ENCODE measurements at regions of chr3 and their contacts with region 1.

Region 1: DNA sequence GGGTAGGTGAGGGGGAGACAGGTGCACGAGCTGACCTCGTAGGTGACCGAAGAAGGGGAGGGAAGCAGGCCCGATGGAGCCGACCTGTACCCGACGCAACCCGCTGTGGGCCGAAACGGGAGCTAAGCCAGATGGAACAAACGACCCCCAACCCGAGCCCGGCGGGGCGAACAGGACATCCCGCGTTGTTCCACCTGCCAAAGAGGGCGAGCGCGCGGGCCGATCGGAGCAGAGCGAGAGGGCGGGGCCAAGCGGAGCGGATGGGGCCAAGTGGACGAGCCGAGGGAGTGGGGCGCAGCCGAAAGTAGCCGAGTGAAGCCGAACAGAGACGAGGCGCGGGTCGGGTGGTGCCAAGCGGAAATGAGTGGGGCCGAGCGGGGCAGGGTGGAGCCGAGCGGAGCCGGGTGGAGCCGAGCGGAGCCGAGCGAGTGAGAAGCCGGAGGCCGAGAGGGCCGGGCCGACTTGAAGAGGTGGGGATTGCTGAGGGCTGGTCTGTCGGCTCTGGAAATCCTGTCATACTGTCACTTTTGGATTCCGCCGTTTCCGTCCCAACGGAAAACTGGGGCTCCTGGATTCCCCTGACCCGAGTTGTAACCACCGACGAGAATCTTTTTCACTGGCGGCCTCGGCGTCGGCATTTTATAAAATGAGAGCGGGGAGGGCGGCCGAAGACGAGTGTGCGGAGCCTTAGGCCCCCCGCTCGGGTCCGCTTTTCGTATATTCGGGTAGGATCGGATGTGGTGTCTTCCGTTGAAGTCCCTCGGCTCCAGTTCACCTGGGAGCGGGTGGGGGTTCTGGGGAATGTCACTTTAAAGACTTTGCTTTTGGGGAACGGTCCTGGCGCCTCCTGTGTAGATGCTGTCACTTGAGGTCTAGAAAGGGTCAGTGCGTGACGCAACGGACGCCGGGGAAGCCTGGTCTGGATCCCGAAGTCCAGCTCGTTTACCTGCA is 15.6 kb upstream of the WNT7A start:
- DNase-seq: peak; percentile 93 to 95 (median 93)
- H3K4me3 ChIP-seq: peak overlapping the region; percentile 58 to 72
- H3K4me3 Mint-ChIP-seq: peak overlapping the region; percentile 78 to 94 (median 90)
- H3K27ac ChIP-seq: peak overlapping the region; percentile 73
- H3K27ac Mint-ChIP-seq: peak overlapping the region; percentile 64 to 96 (median 93)
- H3K4me1 ChIP-seq: peaks cover 40% of the 10 kb centered on the region
- H3K4me1 Mint-ChIP-seq: peaks cover 14 to 47% (median 28%) of the 10 kb centered on the region in 4 donors
- H3K27me3 ChIP-seq: no peaks in the 10 kb centered on the region
- H3K27me3 Mint-ChIP-seq: no peaks in the 10 kb centered on the region

Region 2: GRCh38 chr3:13057282-13058040 is 838.0 kb before region 1 on chr3:
- CTCF ChIA-PET with region 1: no interaction called
- POLR2A ChIA-PET with region 1: no interaction called
- intact Hi-C with region 1: no loop called
- DNase-seq: no peak
- H3K4me3 ChIP-seq: no peak overlapping the region
- H3K4me3 Mint-ChIP-seq: peak overlapping the region in 1 of 8 donors; percentile 4
- H3K27ac ChIP-seq: no peak overlapping the region
- H3K27ac Mint-ChIP-seq: peak overlapping the region in 1 of 7 donors; percentile 69
- H3K4me1 ChIP-seq: no peaks in the 10 kb centered on the region
- H3K4me1 Mint-ChIP-seq: no peaks in the 10 kb centered on the region
- H3K27me3 ChIP-seq: no peaks in the 10 kb centered on the region
- H3K27me3 Mint-ChIP-seq: peaks cover 1 to 2% of the 10 kb centered on the region in 2 donors

Region 3: DNA sequence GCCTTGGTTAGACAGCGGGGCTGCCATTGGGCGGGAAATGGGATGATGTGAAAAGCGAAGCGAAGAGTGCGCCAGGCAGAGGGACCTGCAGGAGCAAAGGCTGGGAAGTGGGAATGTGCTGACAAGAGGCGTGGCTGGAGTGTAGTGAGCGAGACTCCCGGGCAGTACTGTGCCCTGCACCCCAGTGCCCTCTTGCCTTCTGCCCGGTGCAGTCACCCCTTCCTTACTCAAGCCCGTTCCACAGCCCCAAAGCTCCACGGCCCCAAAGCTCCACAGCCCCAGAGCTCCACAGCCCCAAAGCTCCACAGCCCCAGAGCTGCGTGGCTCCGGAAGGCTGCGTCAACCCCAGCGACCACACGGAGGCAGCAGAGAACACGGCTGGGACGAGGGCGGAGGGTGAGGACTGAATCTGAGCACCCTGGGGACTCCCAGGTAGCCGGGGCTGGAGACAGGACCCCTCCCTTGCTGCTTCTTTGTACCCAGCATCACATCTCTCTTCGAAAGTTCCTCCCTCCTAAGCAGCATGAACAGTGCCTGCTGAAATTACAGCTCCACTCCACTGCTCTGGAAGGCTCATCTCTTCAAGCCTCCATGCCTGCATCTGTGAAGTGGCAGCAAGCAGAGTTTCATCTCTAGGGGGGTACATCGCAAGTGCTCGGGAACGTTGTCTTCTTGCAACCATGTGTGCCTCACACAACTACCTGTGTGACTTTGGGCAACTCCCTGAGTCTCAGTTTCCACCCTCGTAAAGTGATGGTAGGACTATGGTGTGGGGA is 237.6 kb before region 1 on chr3:
- CTCF ChIA-PET with region 1: interaction called, 996 read pairs
- POLR2A ChIA-PET with region 1: interaction called, 55 read pairs
- intact Hi-C with region 1: no loop called
- DNase-seq: peak; percentile 62 to 73 (median 69)
- H3K4me3 ChIP-seq: no peak overlapping the region
- H3K4me3 Mint-ChIP-seq: peak overlapping the region in 2 of 8 donors; percentile 55 to 57
- H3K27ac ChIP-seq: no peak overlapping the region
- H3K27ac Mint-ChIP-seq: peak overlapping the region in 2 of 7 donors; percentile 42 to 51
- H3K4me1 ChIP-seq: peaks cover 31% of the 10 kb centered on the region
- H3K4me1 Mint-ChIP-seq: peaks cover 15 to 46% (median 28%) of the 10 kb centered on the region in 4 donors
- H3K27me3 ChIP-seq: peaks cover 6% of the 10 kb centered on the region
- H3K27me3 Mint-ChIP-seq: peaks cover 3 to 5% of the 10 kb centered on the region in 2 donors

Region 4: DNA sequence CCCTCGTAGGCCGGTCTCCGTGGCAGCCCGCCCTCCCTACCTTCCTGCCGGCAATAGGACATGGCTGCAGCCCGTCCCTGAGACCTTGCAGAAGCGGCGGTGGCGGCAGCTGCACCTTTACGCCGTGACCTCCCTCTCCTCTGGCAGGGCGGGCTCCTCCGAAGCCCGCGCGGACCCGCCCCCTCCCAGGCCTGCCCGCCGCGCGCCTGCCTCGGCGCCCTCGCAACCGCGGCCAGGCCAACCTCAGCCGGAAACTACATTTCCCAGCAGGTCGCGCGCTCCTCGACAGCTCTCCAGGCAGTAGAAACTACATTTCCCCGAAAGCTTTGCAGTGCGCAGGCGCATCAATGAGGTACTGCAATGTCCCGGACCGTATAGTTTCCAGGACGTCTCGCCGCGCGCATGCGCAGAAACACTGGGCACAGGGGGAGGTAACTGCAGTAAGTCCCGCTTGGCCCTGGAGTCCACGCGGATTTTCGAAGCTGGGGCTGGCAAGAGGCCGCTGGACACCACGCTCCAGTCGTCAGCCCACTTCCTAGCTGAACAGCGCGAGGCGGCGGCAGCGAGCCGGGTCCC is 229.3 kb after region 1 on chr3 and contains the starts of genes CHCHD4 and TMEM43:
- CTCF ChIA-PET with region 1: interaction called, 13 read pairs
- POLR2A ChIA-PET with region 1: interaction called, 18 read pairs
- intact Hi-C with region 1: loop called (anchors 1 kb)
- DNase-seq: peak; percentile 97 to 99 (median 99)
- H3K4me3 ChIP-seq: peak within 1 kb of the TSS; percentile 53 to 78
- H3K4me3 Mint-ChIP-seq: peak within 1 kb of the TSS; percentile 95 to 98 (median 96)
- H3K27ac ChIP-seq: peak within 1 kb of the TSS; percentile 89
- H3K27ac Mint-ChIP-seq: peak within 1 kb of the TSS; percentile 96 to 97 (median 97)
- H3K4me1 ChIP-seq: peaks cover 38% of the 10 kb centered on the region
- H3K4me1 Mint-ChIP-seq: peaks cover 38 to 64% (median 54%) of the 10 kb centered on the region in 4 donors
- H3K27me3 ChIP-seq: no peaks in the 10 kb centered on the region
- H3K27me3 Mint-ChIP-seq: no peaks in the 10 kb centered on the region
- total RNA-seq, gene CHCHD4: 7.5 to 9.3 TPM
- total RNA-seq, gene TMEM43: 69.3 to 69.7 TPM

Region 5: DNA sequence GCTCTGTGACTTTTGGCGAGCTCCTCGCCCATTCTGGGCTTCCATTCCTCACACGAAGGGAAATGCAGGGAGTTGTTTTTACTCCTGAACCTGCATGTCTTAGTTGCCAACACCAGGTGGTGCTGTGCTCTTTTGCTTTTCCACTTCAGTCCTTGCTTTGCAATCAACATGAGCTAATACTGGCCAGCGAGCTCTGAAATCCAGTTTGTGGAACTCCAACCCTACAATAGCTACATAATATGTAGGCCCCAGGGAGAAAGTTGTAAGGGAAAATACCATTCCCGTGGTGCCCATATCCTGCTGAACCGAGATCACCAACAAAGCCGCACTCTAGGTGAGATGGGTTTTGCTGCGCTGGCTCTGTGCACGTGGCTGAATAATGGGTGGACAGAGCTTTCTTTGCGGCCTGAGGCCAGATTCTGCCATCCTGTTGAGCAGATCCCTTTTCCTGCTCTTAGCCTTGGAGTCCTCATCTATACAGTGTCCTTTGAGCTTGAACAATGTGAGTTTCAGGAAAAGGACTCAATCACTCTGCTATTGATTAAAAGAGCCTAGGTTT is 308.2 kb after region 1 on chr3:
- CTCF ChIA-PET with region 1: interaction called, 41 read pairs
- POLR2A ChIA-PET with region 1: interaction called, 3 read pairs
- intact Hi-C with region 1: loop called (anchors 1 kb)
- DNase-seq: peak in 4 of 5 donors; percentile 31 to 43 (median 35)
- H3K4me3 ChIP-seq: no peak overlapping the region
- H3K4me3 Mint-ChIP-seq: no peak overlapping the region
- H3K27ac ChIP-seq: no peak overlapping the region
- H3K27ac Mint-ChIP-seq: peak overlapping the region in 1 of 7 donors; percentile 56
- H3K4me1 ChIP-seq: no peaks in the 10 kb centered on the region
- H3K4me1 Mint-ChIP-seq: peaks cover 3 to 6% (median 5%) of the 10 kb centered on the region in 4 donors
- H3K27me3 ChIP-seq: no peaks in the 10 kb centered on the region
- H3K27me3 Mint-ChIP-seq: no peaks in the 10 kb centered on the region

Region 6: GRCh38 chr3:14431892-14432834 is 536.7 kb after region 1 on chr3:
- CTCF ChIA-PET with region 1: interaction called, 4 read pairs
- POLR2A ChIA-PET with region 1: interaction called, 18 read pairs
- intact Hi-C with region 1: loop called (anchors 1 kb)
- DNase-seq: peak; percentile 93 to 99 (median 94)
- H3K4me3 ChIP-seq: peak overlapping the region; percentile 55 to 77
- H3K4me3 Mint-ChIP-seq: peak overlapping the region; percentile 77 to 93 (median 80)
- H3K27ac ChIP-seq: peak overlapping the region; percentile 98
- H3K27ac Mint-ChIP-seq: peak overlapping the region; percentile 97 to 100 (median 100)
- H3K4me1 ChIP-seq: peaks cover 97% of the 10 kb centered on the region
- H3K4me1 Mint-ChIP-seq: peaks cover 64 to 98% (median 87%) of the 10 kb centered on the region in 4 donors
- H3K27me3 ChIP-seq: no peaks in the 10 kb centered on the region
- H3K27me3 Mint-ChIP-seq: no peaks in the 10 kb centered on the region

Region 7: GRCh38 chr3:14633819-14634424 is 738.5 kb after region 1 on chr3:
- CTCF ChIA-PET with region 1: no interaction called
- POLR2A ChIA-PET with region 1: no interaction called
- intact Hi-C with region 1: loop called (anchors 5 kb)
- DNase-seq: peak; percentile 44 to 60 (median 52)
- H3K4me3 ChIP-seq: no peak overlapping the region
- H3K4me3 Mint-ChIP-seq: no peak overlapping the region
- H3K27ac ChIP-seq: no peak overlapping the region
- H3K27ac Mint-ChIP-seq: no peak overlapping the region
- H3K4me1 ChIP-seq: no peaks in the 10 kb centered on the region
- H3K4me1 Mint-ChIP-seq: no peaks in the 10 kb centered on the region
- H3K27me3 ChIP-seq: no peaks in the 10 kb centered on the region
- H3K27me3 Mint-ChIP-seq: peaks cover 31 to 39% of the 10 kb centered on the region in 2 donors

Region 8: DNA sequence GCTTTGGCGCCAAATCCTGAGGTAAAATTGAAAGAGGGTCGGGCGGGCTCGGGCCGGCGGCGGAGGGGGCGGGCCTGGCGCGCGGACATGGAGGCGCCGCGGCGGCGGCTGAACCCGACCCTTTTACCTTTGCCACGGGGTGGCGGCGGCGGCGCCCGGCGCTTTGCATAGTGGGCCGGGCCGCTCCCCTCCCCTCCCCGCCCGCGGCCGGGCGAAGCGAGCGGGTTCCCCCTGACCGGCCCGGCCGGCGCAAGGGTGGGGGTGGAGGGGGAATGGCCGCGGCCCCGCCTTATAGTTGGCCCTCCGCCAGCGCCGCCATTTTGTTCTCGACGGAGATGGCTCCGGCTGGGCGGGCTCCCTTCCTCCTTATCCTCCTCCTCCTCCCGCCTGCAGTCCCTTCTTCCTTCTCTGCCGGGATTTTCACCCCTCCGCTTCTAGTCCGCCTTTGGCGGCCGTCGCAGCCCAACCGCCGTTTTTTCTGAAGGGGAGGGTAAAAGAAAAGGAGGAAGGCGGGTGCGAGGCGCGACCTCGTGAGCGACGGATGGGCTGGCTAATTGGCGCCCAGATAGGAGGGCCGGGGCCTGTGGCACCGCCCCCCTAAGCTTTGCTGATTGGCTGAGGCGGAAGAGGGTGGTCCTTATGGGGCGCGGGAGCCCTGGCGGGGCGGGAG is 1052.6 kb after region 1 on chr3:
- CTCF ChIA-PET with region 1: interaction called, 3 read pairs
- POLR2A ChIA-PET with region 1: no interaction called
- intact Hi-C with region 1: loop called (anchors 10 kb)
- DNase-seq: peak; percentile 95 to 99 (median 96)
- H3K4me3 ChIP-seq: peak overlapping the region; percentile 63 to 83
- H3K4me3 Mint-ChIP-seq: peak overlapping the region; percentile 98 to 100 (median 100)
- H3K27ac ChIP-seq: peak overlapping the region; percentile 97
- H3K27ac Mint-ChIP-seq: peak overlapping the region; percentile 99 to 100 (median 100)
- H3K4me1 ChIP-seq: peaks cover 44% of the 10 kb centered on the region
- H3K4me1 Mint-ChIP-seq: peaks cover 27 to 71% (median 48%) of the 10 kb centered on the region in 4 donors
- H3K27me3 ChIP-seq: no peaks in the 10 kb centered on the region
- H3K27me3 Mint-ChIP-seq: no peaks in the 10 kb centered on the region

Measured in CD4-positive, alpha-beta memory T cell (primary cell).